ENCODE measurements at regions of chr15 and their contacts with region 1.

Region 1: GRCh38 chr15:55196458-55197361 is at the start of gene RSL24D1:
- DNase-seq: peak; percentile 94
- H3K4me3 Mint-ChIP-seq: no peak within 1 kb of the TSS
- H3K27ac Mint-ChIP-seq: no peak within 1 kb of the TSS
- H3K4me1 Mint-ChIP-seq: peaks cover under 1% of the 10 kb centered on the region
- H3K27me3 Mint-ChIP-seq: no peaks in the 10 kb centered on the region
- total RNA-seq, gene RSL24D1: 111 and 116 TPM in 2 replicates

Region 2: GRCh38 chr15:55221090-55222011 is 24.6 kb after region 1 on chr15:
- intact Hi-C with region 1: loop called (anchors 1 kb)
- DNase-seq: peak; percentile 3
- H3K4me3 Mint-ChIP-seq: peak overlapping the region; percentile 63
- H3K27ac Mint-ChIP-seq: peak overlapping the region; percentile 98
- H3K4me1 Mint-ChIP-seq: peaks cover 78% of the 10 kb centered on the region
- H3K27me3 Mint-ChIP-seq: no peaks in the 10 kb centered on the region

Region 3: DNA sequence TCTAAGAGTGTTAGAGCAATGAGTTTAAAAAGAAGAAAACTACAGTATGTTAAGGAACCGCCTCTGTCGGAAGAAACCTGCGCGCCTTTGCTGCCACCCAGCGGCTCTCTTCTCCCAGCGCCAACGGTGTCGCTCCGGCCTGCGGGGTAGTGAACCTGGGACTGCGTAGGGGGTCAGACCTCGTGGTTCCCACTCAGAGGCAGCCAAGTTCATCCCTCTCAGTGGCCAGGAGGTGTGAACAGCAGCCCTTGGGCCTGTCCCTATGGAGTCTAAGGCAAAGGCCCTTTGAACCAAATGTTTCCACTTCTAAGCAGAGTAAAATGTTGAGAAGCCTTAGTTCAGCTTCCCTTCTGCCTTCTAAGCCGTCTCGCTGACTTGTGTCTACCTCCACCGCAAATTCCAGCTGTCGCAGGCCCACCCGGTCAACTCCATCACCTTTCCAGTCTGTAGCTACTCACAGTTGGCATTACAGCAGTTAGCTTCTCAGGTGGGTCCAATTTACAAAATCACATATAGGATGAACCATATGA is 93.9 kb after region 1 on chr15:
- intact Hi-C with region 1: loop called (anchors 1 kb)
- DNase-seq: peak; percentile 76
- H3K4me3 Mint-ChIP-seq: peak overlapping the region; percentile 86
- H3K27ac Mint-ChIP-seq: peak overlapping the region; percentile 91
- H3K4me1 Mint-ChIP-seq: peaks cover 31% of the 10 kb centered on the region
- H3K27me3 Mint-ChIP-seq: no peaks in the 10 kb centered on the region

Region 4: GRCh38 chr15:55407949-55408791 is 211.5 kb after region 1 on chr15 and contains the starts of genes CCPG1 and PIERCE2:
- intact Hi-C with region 1: loop called (anchors 1 kb)
- DNase-seq: peak; percentile 89
- H3K4me3 Mint-ChIP-seq: peak within 1 kb of the TSS; percentile 98
- H3K27ac Mint-ChIP-seq: peak within 1 kb of the TSS; percentile 95
- H3K4me1 Mint-ChIP-seq: peaks cover 26% of the 10 kb centered on the region
- H3K27me3 Mint-ChIP-seq: no peaks in the 10 kb centered on the region
- total RNA-seq, gene CCPG1: 15.0 TPM in 2 replicates
- total RNA-seq, gene PIERCE2: not detected in 2 replicates

Region 5: DNA sequence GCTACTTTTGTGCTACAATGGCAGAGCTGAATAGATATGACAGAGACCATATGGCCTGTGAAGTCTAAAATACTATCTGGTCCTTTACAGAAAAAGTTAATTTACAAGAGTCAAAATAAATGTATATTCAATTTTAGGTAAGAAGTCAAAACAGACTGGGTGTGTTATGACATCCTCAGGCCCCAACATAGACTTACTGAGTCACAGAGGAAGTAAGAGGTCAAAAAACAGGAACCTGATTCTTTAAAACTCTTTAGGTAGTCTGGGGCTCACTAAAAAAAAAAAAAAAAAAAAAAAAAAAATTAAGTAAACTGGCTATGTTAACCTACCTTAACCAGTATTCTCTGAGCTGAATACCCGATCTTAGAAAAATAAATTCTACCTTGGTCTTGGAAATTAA is 298.2 kb after region 1 on chr15:
- intact Hi-C with region 1: loop called (anchors 2 kb)
- DNase-seq: no peak
- H3K4me3 Mint-ChIP-seq: no peak overlapping the region
- H3K27ac Mint-ChIP-seq: no peak overlapping the region
- H3K4me1 Mint-ChIP-seq: peaks cover 7% of the 10 kb centered on the region
- H3K27me3 Mint-ChIP-seq: no peaks in the 10 kb centered on the region

Region 6: GRCh38 chr15:55823191-55823670 is 626.5 kb after region 1 on chr15:
- intact Hi-C with region 1: no loop called
- DNase-seq: no peak
- H3K4me3 Mint-ChIP-seq: no peak overlapping the region
- H3K27ac Mint-ChIP-seq: no peak overlapping the region
- H3K4me1 Mint-ChIP-seq: peaks cover 6% of the 10 kb centered on the region
- H3K27me3 Mint-ChIP-seq: no peaks in the 10 kb centered on the region

Measured in activated T-helper 1 cell treated with anti-CD3 and anti-CD28 coated beads, Interleukin-12 subunit alpha, Interleukin-12 subunit beta, Interleukin-2, Interleukin-4 antibody, amounts not matched to agents 30 ng/mL and 10 ng/mL and 1 ng/mL, durations not matched to agents 14 hours and 24 hours and 36 hours (primary cell).